ENCODE measurements at regions of chr3 and their contacts with region 1.

Region 1: DNA sequence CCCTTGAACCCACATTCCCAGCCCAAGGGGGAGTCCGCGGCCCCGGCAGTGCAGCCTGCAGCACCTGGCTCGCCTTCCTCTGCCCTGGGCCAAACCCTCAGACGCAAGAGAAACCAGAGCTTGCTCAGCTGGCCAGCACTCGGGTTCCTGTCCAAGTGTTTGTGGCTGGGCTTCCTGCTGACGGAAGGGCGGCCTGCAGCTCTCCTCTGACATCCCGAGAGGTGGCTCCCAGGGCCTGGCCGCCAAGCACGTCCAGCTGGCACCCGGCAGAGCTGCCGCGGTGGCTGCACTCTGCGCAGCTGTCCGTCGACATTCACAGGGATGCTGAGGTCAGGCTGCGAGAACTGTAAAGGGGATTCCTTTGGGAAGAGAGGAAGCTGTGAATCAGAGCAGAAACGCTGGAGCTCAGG is 85.6 kb downstream of the CPN2 start:
- DNase-seq: no peak
- H3K4me3 ChIP-seq: no peak overlapping the region
- H3K27ac ChIP-seq: no peak overlapping the region
- H3K4me1 ChIP-seq: peaks cover 0 to 9% (median 4%) of the 10 kb centered on the region in 4 experiments; a peak in 5 of 7 replicates
- H3K27me3 ChIP-seq: peaks cover 0 to 4% (median 1%) of the 10 kb centered on the region in 4 experiments; a peak in 2 of 7 replicates
- CTCF ChIP-seq: no peak
- EP300 ChIP-seq: no peak
- POLR2A ChIP-seq: no peak
- RAD21 ChIP-seq: no peak

Region 2: GRCh38 chr3:194134757-194135528 is 130.5 kb before region 1 on chr3:
- CTCF ChIA-PET with region 1: interaction called, 20 read pairs
- POLR2A ChIA-PET with region 1: interaction called, 6 read pairs
- DNase-seq: peak; percentile 83 to 88
- H3K4me3 ChIP-seq: peak overlapping the region; percentile 43 to 73 (median 59)
- H3K27ac ChIP-seq: 0 out of 2 replicates have a peak overlapping the region, but pooled peaks have one; percentile 5
- H3K4me1 ChIP-seq: peaks cover 30 to 51% (median 33%) of the 10 kb centered on the region in 4 experiments
- H3K27me3 ChIP-seq: peaks cover 0 to 26% (median 12%) of the 10 kb centered on the region in 4 experiments; a peak in 4 of 7 replicates
- CTCF ChIP-seq: no peak
- EP300 ChIP-seq: no peak
- POLR2A ChIP-seq: no peak
- RAD21 ChIP-seq: peak in 1 of 2 experiments; percentile 11; a peak in 1 of 4 replicates

Region 3: DNA sequence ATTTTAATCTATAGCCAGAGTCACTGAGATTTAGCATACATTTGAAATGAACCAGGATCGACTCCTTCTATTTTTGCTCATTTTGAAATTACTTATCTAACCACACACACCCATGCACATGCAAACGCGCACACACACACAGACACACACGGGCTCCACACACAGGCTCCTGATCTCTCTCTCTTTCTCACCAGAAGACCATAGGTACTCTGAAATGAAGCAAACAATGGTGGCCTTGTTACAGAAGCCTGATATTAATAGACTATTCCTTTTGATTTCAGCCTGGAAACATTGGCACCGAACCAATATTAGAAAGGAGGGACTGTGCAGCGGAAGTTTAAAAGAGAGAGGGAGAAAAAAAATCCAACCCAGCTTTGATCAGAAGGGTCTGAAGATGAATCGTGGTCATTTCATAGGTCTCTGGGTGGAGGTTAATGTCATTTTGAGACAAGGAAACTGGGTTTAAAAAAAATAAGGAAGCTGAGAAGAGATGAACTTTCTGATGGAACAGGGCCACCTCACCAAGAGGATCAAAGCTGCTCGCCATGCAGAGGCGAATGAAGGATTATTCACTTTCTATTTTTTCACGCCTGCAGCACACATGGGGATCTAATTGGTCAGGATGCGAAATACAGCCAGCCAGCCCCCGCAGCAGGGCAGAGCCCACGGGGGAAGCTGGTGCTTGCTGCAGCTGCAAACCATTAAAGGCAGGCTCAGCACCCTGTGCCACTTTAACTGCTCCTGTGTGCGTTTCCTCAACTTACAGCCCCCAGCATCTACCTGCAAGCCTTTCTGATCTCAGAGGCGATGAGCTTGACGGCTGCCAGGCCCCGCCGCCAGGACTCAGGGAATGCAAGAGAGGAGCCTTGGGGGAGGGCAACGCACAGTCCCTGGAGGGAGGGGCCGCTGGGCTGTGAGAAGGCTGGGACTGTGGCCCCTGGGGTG is 40.7 kb before region 1 on chr3:
- CTCF ChIA-PET with region 1: interaction called, 16 read pairs
- POLR2A ChIA-PET with region 1: no interaction called
- DNase-seq: peak in 1 of 2 experiments; percentile 54
- H3K4me3 ChIP-seq: no peak overlapping the region
- H3K27ac ChIP-seq: no peak overlapping the region
- H3K4me1 ChIP-seq: peaks cover 0 to 11% (median 7%) of the 10 kb centered on the region in 4 experiments; a peak in 6 of 7 replicates
- H3K27me3 ChIP-seq: no peaks in the 10 kb centered on the region
- CTCF ChIP-seq: no peak
- EP300 ChIP-seq: no peak
- POLR2A ChIP-seq: no peak
- RAD21 ChIP-seq: no peak

Region 4: DNA sequence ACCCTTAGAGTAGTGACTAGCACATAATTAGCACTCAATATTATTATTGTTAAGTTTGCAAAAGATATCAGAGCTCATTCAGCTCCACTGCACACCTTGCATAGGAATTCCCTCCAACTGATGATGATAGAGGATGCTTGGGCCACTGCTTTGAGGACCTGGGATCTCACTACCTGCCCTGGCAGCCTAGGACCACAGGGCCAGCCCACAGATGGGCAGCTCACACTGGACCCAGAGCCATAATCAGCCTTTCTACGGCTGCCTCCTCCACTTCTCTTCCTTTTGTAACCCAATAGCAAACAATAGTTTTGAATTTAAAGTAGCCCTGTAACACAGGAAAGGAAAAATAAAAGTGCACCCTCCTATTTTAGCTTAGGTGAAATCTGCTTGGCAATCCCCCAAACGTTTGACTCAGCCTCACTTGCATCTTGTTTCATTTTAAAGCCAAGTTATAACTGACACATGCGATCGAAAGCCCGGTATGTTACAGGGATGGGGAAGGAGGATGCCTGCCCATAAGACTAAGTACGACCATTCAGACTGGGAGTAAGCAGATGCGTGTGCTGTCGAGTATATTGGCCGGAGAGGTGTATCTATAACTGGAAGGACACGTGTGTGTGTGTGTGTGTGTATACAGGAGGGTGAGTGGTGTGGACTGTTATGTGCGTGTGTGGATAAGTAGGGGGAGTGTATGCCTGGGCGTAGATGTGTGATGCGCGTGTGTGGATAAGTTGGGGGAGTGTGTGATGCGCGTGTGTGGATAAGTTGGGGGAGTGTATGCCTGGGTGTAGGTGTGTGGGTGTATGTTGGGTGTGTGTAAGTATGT is 19.7 kb after region 1 on chr3:
- CTCF ChIA-PET with region 1: interaction called, 37 read pairs
- POLR2A ChIA-PET with region 1: interaction called, 4 read pairs
- DNase-seq: no peak
- H3K4me3 ChIP-seq: no peak overlapping the region; a peak in 1 of 8 replicates
- H3K27ac ChIP-seq: no peak overlapping the region
- H3K4me1 ChIP-seq: peaks cover 20 to 28% (median 21%) of the 10 kb centered on the region in 4 experiments; a peak in 6 of 7 replicates
- H3K27me3 ChIP-seq: no peaks in the 10 kb centered on the region; a peak in 1 of 7 replicates
- CTCF ChIP-seq: no peak
- EP300 ChIP-seq: no peak
- POLR2A ChIP-seq: no peak
- RAD21 ChIP-seq: no peak

Region 5: GRCh38 chr3:194556086-194557056 is 290.9 kb after region 1 on chr3:
- CTCF ChIA-PET with region 1: no interaction called
- POLR2A ChIA-PET with region 1: no interaction called
- DNase-seq: no peak
- H3K4me3 ChIP-seq: no peak overlapping the region
- H3K27ac ChIP-seq: no peak overlapping the region
- H3K4me1 ChIP-seq: peaks cover 0 to 8% (median 2%) of the 10 kb centered on the region in 4 experiments; a peak in 3 of 7 replicates
- H3K27me3 ChIP-seq: no peaks in the 10 kb centered on the region
- CTCF ChIP-seq: no peak
- EP300 ChIP-seq: no peak
- POLR2A ChIP-seq: no peak
- RAD21 ChIP-seq: no peak